ENCODE measurements at regions of chr14 and their contacts with region 1.

Region 1: DNA sequence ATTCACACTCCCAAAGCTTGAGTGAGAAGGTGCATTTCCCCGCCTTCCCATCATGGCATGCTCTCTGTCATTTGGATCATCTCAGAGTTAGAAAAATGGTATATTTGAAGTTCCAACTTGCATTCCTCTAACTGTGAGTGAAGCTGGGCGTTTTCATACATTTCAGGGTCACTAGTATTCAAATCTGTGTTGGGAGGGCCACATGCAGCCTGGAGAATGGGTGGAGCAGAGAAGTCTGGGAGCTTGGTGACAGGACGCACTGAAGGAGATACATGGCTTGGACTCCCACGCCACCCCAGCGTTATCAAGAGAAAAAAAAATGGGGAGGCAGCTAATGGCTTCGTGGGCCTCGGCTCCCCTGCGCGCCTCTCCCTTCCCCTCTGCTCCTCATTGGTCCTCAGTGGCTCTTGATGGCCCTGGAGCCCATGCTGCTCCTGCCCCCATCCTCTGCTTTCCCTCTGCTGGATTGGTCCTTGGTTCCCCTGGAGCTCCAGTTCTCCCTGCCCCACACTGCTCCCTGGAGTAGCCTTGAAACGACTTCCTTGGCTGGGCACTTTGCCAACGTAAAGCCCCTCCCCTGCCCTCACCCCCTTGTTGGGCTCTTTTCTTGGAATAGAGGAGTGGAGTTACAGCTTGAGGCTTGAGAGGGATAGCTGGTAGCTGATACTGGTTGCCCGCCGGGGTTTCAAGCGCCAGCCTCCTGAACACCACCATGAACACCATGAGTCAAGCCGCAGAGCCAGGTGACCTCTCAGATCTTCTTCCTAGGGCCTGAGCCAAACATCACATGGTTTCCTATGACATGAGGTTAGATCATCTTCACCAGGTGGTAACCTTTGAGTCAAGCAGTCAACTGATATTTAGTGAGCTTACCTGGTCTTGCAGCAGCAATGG is 139.6 kb downstream of the PRKCH start:
- DNase-seq: no peak
- ATAC-seq: 0 out of 2 replicates have a peak, but pooled peaks have one; percentile 12
- H3K4me3 Mint-ChIP-seq: no peak overlapping the region
- H3K27ac Mint-ChIP-seq: no peak overlapping the region
- H3K4me1 Mint-ChIP-seq: peaks cover 18% of the 10 kb centered on the region
- H3K27me3 Mint-ChIP-seq: no peaks in the 10 kb centered on the region
- CTCF ChIP-seq: no peak

Region 2: GRCh38 chr14:61837336-61838229 is 376.6 kb after region 1 on chr14:
- CTCF ChIA-PET with region 1: interaction called, 12 read pairs
- POLR2A ChIA-PET with region 1: no interaction called
- DNase-seq: peak; percentile 78
- ATAC-seq: peak; percentile 92
- H3K4me3 Mint-ChIP-seq: no peak overlapping the region
- H3K27ac Mint-ChIP-seq: no peak overlapping the region
- H3K4me1 Mint-ChIP-seq: peaks cover 17% of the 10 kb centered on the region
- H3K27me3 Mint-ChIP-seq: no peaks in the 10 kb centered on the region
- CTCF ChIP-seq: peak; percentile 81